Natural killer cell (primary cell): ENCODE measurements at regions of chr1 and their contacts with region 1.

Region 1: GRCh38 chr1:182781841-182782586 is 7.6 kb upstream of the NPL start:
- DNase-seq: peak; percentile 54 to 80
- ATAC-seq: peak; percentile 69 to 88 (median 84)
- H3K4me3 ChIP-seq: no peak overlapping the region
- H3K4me3 Mint-ChIP-seq: no peak overlapping the region
- H3K27ac ChIP-seq: no peak overlapping the region
- H3K27ac Mint-ChIP-seq: no peak overlapping the region
- H3K4me1 ChIP-seq: no peaks in the 10 kb centered on the region
- H3K4me1 Mint-ChIP-seq: peaks cover 7 to 10% of the 10 kb centered on the region in 2 donors
- H3K27me3 ChIP-seq: no peaks in the 10 kb centered on the region
- H3K27me3 Mint-ChIP-seq: peaks cover 8 to 23% of the 10 kb centered on the region in 2 donors
- CTCF ChIP-seq: peak; percentile 63

Region 2: GRCh38 chr1:182446033-182446669 is 335.9 kb before region 1 on chr1:
- intact Hi-C with region 1: loop called (anchors 5 kb)
- DNase-seq: peak in 1 of 2 donors; percentile 62
- ATAC-seq: peak; percentile 44 to 72 (median 64)
- H3K4me3 ChIP-seq: no peak overlapping the region
- H3K4me3 Mint-ChIP-seq: no peak overlapping the region
- H3K27ac ChIP-seq: no peak overlapping the region
- H3K27ac Mint-ChIP-seq: no peak overlapping the region
- H3K4me1 ChIP-seq: no peaks in the 10 kb centered on the region
- H3K4me1 Mint-ChIP-seq: no peaks in the 10 kb centered on the region
- H3K27me3 ChIP-seq: no peaks in the 10 kb centered on the region
- H3K27me3 Mint-ChIP-seq: no peaks in the 10 kb centered on the region
- CTCF ChIP-seq: peak; percentile 66

Region 3: DNA sequence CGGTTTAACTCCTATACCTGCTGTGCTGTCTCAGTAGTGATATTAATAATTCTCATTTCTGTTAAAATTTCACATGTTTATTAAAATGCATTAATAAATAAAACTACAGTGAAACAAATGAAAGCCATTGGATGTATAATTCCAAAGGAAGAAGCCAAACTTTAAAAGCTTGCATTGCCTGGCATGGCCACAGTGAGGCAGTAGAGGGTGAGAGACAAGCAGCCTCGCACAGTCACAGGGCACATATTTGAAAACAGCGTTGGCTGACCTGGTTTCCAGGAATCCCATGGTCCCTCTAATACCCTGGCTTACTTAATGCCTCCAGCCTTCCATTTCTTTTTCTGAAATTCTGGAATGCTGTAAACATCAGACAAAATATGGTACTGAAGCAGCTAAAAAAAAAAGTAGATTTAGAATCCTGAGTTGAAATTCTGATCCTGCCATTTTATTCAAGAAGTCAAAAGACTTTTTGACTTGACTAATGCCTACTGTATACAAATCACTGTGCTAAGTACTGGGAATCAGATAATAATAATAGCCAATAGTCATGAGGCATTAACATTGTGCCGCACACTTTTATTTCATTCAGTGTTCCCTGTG is 186.3 kb before region 1 on chr1:
- intact Hi-C with region 1: loop called (anchors 1 kb)
- DNase-seq: peak; percentile 50 to 81
- ATAC-seq: peak; percentile 74 to 95 (median 81)
- H3K4me3 ChIP-seq: no peak overlapping the region
- H3K4me3 Mint-ChIP-seq: no peak overlapping the region
- H3K27ac ChIP-seq: no peak overlapping the region
- H3K27ac Mint-ChIP-seq: no peak overlapping the region
- H3K4me1 ChIP-seq: no peaks in the 10 kb centered on the region
- H3K4me1 Mint-ChIP-seq: no peaks in the 10 kb centered on the region
- H3K27me3 ChIP-seq: no peaks in the 10 kb centered on the region
- H3K27me3 Mint-ChIP-seq: peaks cover 9 to 12% of the 10 kb centered on the region in 2 donors
- CTCF ChIP-seq: peak; percentile 91

Region 4: GRCh38 chr1:182720463-182720862 is 61.6 kb before region 1 on chr1:
- intact Hi-C with region 1: no loop called
- DNase-seq: no peak
- ATAC-seq: no peak
- H3K4me3 ChIP-seq: no peak overlapping the region
- H3K4me3 Mint-ChIP-seq: no peak overlapping the region
- H3K27ac ChIP-seq: no peak overlapping the region
- H3K27ac Mint-ChIP-seq: no peak overlapping the region
- H3K4me1 ChIP-seq: no peaks in the 10 kb centered on the region
- H3K4me1 Mint-ChIP-seq: peaks cover 11% of the 10 kb centered on the region in 2 donors
- H3K27me3 ChIP-seq: no peaks in the 10 kb centered on the region
- H3K27me3 Mint-ChIP-seq: peaks cover 27 to 48% of the 10 kb centered on the region in 2 donors
- CTCF ChIP-seq: no peak

Region 5: GRCh38 chr1:182739545-182739944 is 42.5 kb before region 1 on chr1:
- intact Hi-C with region 1: no loop called
- DNase-seq: no peak
- ATAC-seq: peak in 2 of 3 donors; percentile 47 to 65
- H3K4me3 ChIP-seq: no peak overlapping the region
- H3K4me3 Mint-ChIP-seq: no peak overlapping the region
- H3K27ac ChIP-seq: no peak overlapping the region
- H3K27ac Mint-ChIP-seq: no peak overlapping the region
- H3K4me1 ChIP-seq: no peaks in the 10 kb centered on the region
- H3K4me1 Mint-ChIP-seq: peaks cover 0 to 8% of the 10 kb centered on the region in 2 donors
- H3K27me3 ChIP-seq: no peaks in the 10 kb centered on the region
- H3K27me3 Mint-ChIP-seq: peaks cover 0 to 3% of the 10 kb centered on the region in 2 donors
- CTCF ChIP-seq: no peak